Natural killer cell (primary cell): ENCODE measurements at regions of chr5 and their contacts with region 1.

Region 1: GRCh38 chr5:14208071-14209021 is 65.2 kb downstream of the TRIO start:
- DNase-seq: no peak
- ATAC-seq: peak; percentile 30 to 53 (median 51)
- H3K4me3 ChIP-seq: no peak overlapping the region
- H3K4me3 Mint-ChIP-seq: no peak overlapping the region
- H3K27ac ChIP-seq: peak overlapping the region; percentile 44
- H3K27ac Mint-ChIP-seq: peak overlapping the region; percentile 37 to 86
- H3K4me1 ChIP-seq: peaks cover 38% of the 10 kb centered on the region
- H3K4me1 Mint-ChIP-seq: peaks cover 47 to 74% of the 10 kb centered on the region in 2 donors
- H3K27me3 ChIP-seq: no peaks in the 10 kb centered on the region
- H3K27me3 Mint-ChIP-seq: no peaks in the 10 kb centered on the region
- CTCF ChIP-seq: no peak

Region 2: DNA sequence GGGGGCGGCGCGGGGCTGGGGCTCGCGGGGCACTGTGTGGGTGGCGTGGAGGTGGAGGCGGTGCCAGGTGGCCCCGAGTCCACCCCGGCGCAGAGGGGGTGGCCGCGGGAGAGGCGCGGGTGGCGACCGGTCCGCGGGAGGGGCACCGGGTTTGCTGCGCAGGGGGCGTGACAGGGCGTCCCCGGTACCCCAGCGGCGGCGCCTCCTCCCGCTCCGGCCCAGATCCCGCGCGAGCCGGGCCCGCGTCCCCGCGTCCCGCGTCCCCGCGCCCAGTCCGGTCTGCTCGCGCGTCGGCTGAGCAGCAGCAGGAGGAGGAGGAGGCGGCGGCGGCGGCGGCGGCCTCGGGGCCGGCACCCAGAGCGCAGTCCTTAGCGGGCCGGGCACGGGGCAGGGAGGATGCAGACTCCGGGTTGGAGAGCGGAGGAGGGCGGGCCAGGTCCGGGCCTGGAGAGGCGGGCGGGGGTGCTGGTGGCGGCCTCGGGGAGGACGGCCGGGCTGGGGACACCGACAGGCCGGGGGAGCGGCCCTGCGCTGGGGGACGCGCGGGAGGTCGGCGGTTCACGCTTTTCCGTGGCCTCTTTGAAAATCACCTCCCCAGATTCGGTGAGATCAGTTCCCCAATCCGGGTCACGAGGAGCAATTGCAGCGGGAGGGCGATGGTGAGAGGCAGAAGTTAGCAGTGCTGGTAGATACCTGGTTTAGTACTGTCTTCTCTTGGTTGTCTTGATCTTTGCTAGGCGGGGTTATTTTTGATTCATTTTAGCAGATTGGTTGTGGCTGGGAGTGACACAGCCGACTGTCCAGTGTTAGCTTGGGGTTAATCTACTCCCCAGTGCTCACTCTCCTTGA is 63.5 kb before region 1 on chr5:
- intact Hi-C with region 1: loop called (anchors 5 kb)
- DNase-seq: peak; percentile 59 to 70
- ATAC-seq: peak; percentile 62 to 75 (median 66)
- H3K4me3 ChIP-seq: peak overlapping the region; percentile 70
- H3K4me3 Mint-ChIP-seq: peak overlapping the region; percentile 92
- H3K27ac ChIP-seq: peak overlapping the region; percentile 81
- H3K27ac Mint-ChIP-seq: peak overlapping the region; percentile 68 to 78
- H3K4me1 ChIP-seq: peaks cover 24% of the 10 kb centered on the region
- H3K4me1 Mint-ChIP-seq: peaks cover 21 to 30% of the 10 kb centered on the region in 2 donors
- H3K27me3 ChIP-seq: no peaks in the 10 kb centered on the region
- H3K27me3 Mint-ChIP-seq: peaks cover 2 to 9% of the 10 kb centered on the region in 2 donors
- CTCF ChIP-seq: no peak

Region 3: GRCh38 chr5:14174230-14174637 is 34.1 kb before region 1 on chr5:
- intact Hi-C with region 1: loop called (anchors 5 kb)
- DNase-seq: no peak
- ATAC-seq: peak; percentile 27 to 49 (median 41)
- H3K4me3 ChIP-seq: no peak overlapping the region
- H3K4me3 Mint-ChIP-seq: peak overlapping the region; percentile 35
- H3K27ac ChIP-seq: no peak overlapping the region
- H3K27ac Mint-ChIP-seq: peak overlapping the region; percentile 18 to 78
- H3K4me1 ChIP-seq: peaks cover 30% of the 10 kb centered on the region
- H3K4me1 Mint-ChIP-seq: peaks cover 40 to 47% of the 10 kb centered on the region in 2 donors
- H3K27me3 ChIP-seq: no peaks in the 10 kb centered on the region
- H3K27me3 Mint-ChIP-seq: no peaks in the 10 kb centered on the region
- CTCF ChIP-seq: no peak

Region 4: DNA sequence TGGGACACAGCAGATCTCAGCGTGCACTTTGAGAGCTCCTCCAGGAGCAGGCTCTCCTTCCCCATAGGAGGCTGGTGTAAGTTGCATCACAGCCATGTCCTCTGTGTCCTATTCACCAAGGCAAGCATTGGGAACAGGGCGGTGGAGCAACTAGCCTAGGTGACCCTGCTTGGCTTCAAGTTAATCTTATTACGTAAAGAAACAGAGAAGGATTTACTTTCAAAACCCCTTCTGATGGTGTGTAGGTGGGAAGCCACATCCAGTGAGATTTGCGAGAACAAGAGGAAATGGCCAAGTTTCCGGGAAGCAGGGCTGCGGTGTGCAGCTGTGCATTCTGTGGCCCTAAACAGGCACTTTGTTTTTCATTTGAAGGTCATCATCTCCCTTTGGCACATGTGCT is 15.0 kb after region 1 on chr5:
- intact Hi-C with region 1: loop called (anchors 2 kb)
- DNase-seq: peak in 1 of 2 donors; percentile 12
- ATAC-seq: peak; percentile 41 to 59 (median 50)
- H3K4me3 ChIP-seq: no peak overlapping the region
- H3K4me3 Mint-ChIP-seq: peak overlapping the region; percentile 71
- H3K27ac ChIP-seq: peak overlapping the region; percentile 15
- H3K27ac Mint-ChIP-seq: peak overlapping the region; percentile 71 to 80
- H3K4me1 ChIP-seq: peaks cover 17% of the 10 kb centered on the region
- H3K4me1 Mint-ChIP-seq: peaks cover 43 to 76% of the 10 kb centered on the region in 2 donors
- H3K27me3 ChIP-seq: no peaks in the 10 kb centered on the region
- H3K27me3 Mint-ChIP-seq: no peaks in the 10 kb centered on the region
- CTCF ChIP-seq: no peak

Region 5: GRCh38 chr5:14264604-14265316 is 56.4 kb after region 1 on chr5:
- intact Hi-C with region 1: loop called (anchors 5 kb)
- DNase-seq: peak; percentile 81 to 87
- ATAC-seq: peak; percentile 84 to 92 (median 91)
- H3K4me3 ChIP-seq: peak overlapping the region; percentile 19
- H3K4me3 Mint-ChIP-seq: peak overlapping the region; percentile 77
- H3K27ac ChIP-seq: no peak overlapping the region
- H3K27ac Mint-ChIP-seq: peak overlapping the region; percentile 66 to 88
- H3K4me1 ChIP-seq: peaks cover 22% of the 10 kb centered on the region
- H3K4me1 Mint-ChIP-seq: peaks cover 25 to 46% of the 10 kb centered on the region in 2 donors
- H3K27me3 ChIP-seq: no peaks in the 10 kb centered on the region
- H3K27me3 Mint-ChIP-seq: no peaks in the 10 kb centered on the region
- CTCF ChIP-seq: no peak